ENCODE measurements at regions of chr9 and their contacts with region 1.

Region 1: GRCh38 chr9:105414947-105415661 is 32.7 kb upstream of the FSD1L start:
- DNase-seq: no peak
- H3K4me3 ChIP-seq: no peak overlapping the region
- H3K27ac ChIP-seq: no peak overlapping the region
- H3K4me1 ChIP-seq: peaks cover 0 to 6% (median 5%) of the 10 kb centered on the region in 6 donors
- H3K27me3 ChIP-seq: no peaks in the 10 kb centered on the region
- CTCF ChIP-seq: peak; percentile 36 to 85 (median 79)
- POLR2A ChIP-seq: no peak

Region 2: DNA sequence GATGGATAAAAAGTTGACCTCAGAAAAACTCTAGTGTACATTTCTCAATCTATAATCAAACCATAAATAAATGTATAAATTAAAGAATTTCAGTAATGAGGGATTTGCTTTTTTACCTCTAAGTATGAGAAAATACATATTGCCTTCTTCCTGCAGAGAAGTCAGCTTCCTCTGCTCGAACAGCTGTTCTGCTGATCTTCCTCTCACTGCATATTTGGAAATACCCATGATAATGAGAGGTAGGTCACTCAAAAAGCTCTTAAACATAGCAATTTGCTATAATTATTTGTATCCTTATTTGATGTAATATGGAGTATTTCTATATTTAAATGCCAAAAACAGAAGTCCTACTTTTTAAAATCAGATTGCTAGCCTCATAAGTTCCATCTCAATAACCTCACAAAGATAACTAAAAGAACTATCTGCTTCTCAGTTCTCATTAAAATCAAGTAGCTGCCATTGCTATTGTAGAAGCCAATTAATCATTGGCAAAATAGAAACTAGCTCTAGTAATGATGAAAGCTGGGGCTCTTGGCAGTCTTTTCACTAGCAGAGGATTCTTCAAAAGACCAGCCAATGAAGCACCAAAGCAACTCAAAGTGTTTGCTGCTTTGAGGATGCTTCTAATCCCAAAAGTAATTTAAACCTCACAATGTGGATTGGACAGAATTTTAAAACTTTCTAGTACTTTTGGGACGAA is 756.5 kb before region 1 on chr9:
- intact Hi-C with region 1: no loop called
- DNase-seq: no peak
- H3K4me3 ChIP-seq: no peak overlapping the region
- H3K27ac ChIP-seq: no peak overlapping the region
- H3K4me1 ChIP-seq: no peaks in the 10 kb centered on the region
- H3K27me3 ChIP-seq: no peaks in the 10 kb centered on the region
- CTCF ChIP-seq: no peak
- POLR2A ChIP-seq: no peak

Region 3: DNA sequence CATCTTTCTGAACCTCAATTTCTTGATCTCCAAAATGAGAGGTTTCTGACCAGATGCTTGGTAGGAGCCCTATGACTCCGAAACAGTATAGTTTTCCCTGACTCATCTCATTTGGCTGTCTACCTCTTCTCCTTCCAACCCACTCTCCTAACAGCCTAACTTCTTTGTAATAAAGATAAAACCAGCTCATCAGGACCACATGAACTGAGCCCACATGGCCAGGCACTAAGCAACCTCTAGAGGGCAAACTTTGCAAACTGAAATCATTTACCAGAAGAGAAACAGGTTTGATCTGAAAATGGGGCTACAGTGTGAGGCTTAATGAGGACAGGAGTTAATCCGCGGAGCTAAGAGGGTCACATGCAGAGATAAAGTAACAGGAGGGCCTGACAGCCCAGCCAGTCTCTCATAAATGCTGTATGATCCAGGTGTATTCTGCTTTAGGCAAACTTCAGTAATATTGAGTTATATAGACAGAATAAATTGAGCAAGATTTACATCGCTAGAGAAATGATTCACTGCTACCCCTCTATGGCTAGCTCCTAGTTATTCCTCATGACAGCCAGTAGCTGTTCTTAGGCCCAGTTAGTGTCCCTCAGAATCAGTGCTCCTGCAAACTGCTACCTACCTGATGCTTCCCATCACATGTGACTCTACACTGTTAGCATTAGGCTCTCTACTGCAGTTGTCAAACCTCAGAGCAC is 551.8 kb before region 1 on chr9:
- intact Hi-C with region 1: loop called (anchors 5 kb)
- DNase-seq: no peak
- H3K4me3 ChIP-seq: no peak overlapping the region
- H3K27ac ChIP-seq: peak overlapping the region in 1 of 8 donors; percentile 6
- H3K4me1 ChIP-seq: peaks cover 0 to 89% (median 39%) of the 10 kb centered on the region in 6 donors
- H3K27me3 ChIP-seq: no peaks in the 10 kb centered on the region
- CTCF ChIP-seq: peak; percentile 61 to 88 (median 74)
- POLR2A ChIP-seq: no peak

Region 4: DNA sequence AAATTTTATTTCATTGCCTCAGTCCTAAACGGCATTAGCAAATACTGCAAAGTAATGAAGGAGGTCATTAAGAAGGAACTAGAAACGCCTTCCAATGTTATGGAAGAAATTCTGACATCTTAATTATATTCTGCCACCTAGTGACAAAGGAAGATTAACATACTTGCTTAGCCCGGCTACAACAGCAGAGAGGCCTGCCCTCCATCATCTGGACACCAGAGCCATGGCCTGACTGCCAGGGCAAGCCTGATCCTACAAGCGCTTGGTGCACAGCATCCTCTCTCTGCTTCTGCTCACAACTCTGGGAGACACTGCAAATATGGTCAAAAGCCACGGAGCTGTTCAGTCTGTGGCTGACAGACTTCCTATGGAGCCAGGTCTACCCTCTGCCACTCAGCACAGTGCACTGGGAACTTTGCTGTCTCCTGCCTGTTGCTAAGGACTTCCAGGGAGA is 257.9 kb before region 1 on chr9:
- intact Hi-C with region 1: loop called (anchors 5 kb)
- DNase-seq: peak; percentile 74
- H3K4me3 ChIP-seq: no peak overlapping the region
- H3K27ac ChIP-seq: no peak overlapping the region
- H3K4me1 ChIP-seq: peaks cover 0 to 30% (median 8%) of the 10 kb centered on the region in 6 donors
- H3K27me3 ChIP-seq: no peaks in the 10 kb centered on the region
- CTCF ChIP-seq: peak; percentile 21 to 68 (median 56)
- POLR2A ChIP-seq: no peak

Region 5: GRCh38 chr9:105205787-105206495 is 209.2 kb before region 1 on chr9:
- intact Hi-C with region 1: no loop called
- DNase-seq: no peak
- H3K4me3 ChIP-seq: no peak overlapping the region
- H3K27ac ChIP-seq: peak overlapping the region in 5 of 8 donors; percentile 10 to 51 (median 17)
- H3K4me1 ChIP-seq: peaks cover 0 to 10% (median 0%) of the 10 kb centered on the region in 6 donors
- H3K27me3 ChIP-seq: no peaks in the 10 kb centered on the region
- CTCF ChIP-seq: no peak
- POLR2A ChIP-seq: no peak

Region 6: DNA sequence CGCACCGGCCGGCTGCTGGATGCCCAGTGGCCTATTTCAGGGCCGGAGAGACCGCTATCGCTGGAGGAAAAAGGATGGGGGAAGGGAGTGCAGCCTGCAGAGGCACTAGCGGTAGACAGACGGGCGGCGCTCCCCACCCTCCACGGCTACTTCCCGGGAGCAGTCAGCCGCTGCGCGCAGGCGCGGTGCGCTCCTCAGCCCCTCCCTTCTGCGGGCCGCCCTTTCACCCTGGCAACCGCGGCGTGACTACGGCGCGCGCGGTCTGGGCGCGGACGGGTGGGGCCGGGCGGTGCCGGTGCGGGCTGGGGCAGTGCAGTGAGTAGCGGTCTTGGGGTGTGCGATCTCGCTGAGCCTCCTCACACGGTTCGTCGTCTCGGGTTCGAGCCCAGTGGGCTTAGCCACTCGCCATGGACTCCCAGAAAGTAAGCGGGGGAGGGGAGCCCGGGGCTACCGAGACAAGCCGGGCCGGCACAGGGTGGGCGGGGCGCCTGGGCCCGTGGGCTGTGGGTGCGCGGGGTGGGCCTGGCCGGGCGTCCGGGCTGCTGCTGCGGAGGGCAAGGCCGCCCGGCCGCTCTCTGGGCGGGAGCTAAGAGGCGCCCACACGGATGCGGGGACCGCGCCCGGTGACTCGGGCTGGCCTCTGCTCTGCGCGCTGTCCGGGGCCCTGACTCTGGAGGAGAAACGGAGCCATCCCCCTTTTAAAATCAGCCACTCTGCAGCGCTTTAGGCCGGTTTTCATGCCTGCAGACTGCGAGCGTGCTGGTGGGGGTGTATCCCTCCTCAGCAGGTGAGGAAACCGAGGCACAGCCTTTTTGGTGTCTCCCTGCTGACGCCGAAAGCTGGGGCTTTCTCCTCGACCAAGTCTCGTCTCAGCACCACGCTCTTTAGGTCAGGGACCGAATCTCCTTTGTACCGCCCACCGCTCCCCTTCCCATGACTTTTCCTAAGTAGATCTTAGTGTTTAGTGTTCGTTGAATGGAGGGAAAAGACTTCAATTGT is 33.0 kb after region 1 on chr9 and contains the start of gene FSD1L:
- intact Hi-C with region 1: no loop called
- DNase-seq: peak; percentile 97
- H3K4me3 ChIP-seq: peak within 1 kb of the TSS; percentile 69 to 99 (median 86)
- H3K27ac ChIP-seq: peak within 1 kb of the TSS in 7 of 8 donors; percentile 22 to 82 (median 69)
- H3K4me1 ChIP-seq: peaks cover 0 to 26% (median 16%) of the 10 kb centered on the region in 6 donors
- H3K27me3 ChIP-seq: no peaks in the 10 kb centered on the region
- CTCF ChIP-seq: peak in 5 of 11 experiments; percentile 5 to 52 (median 21)
- POLR2A ChIP-seq: no peak
- total RNA-seq, gene FSD1L: 3.0 to 5.8 (median 5.1) TPM